Colonic mucosa (tissue), 4 donors: ENCODE measurements at regions of chr7 and their contacts with region 1.

Region 1: GRCh38 chr7:43582503-43583423 is at the start of gene STK17A:
- DNase-seq: peak; percentile 93
- H3K4me3 ChIP-seq: peak within 1 kb of the TSS; percentile 92
- H3K27ac ChIP-seq: peak within 1 kb of the TSS; percentile 94
- H3K4me1 ChIP-seq: no peaks in the 10 kb centered on the region
- H3K27me3 ChIP-seq: no peaks in the 10 kb centered on the region
- CTCF ChIP-seq: peak; percentile 88
- total RNA-seq, gene STK17A: 16.0 to 30.6 TPM

Region 2: GRCh38 chr7:43516581-43517342 is 66.0 kb before region 1 on chr7:
- intact Hi-C with region 1: no loop called
- DNase-seq: no peak
- H3K4me3 ChIP-seq: no peak overlapping the region
- H3K27ac ChIP-seq: no peak overlapping the region
- H3K4me1 ChIP-seq: no peaks in the 10 kb centered on the region
- H3K27me3 ChIP-seq: no peaks in the 10 kb centered on the region
- CTCF ChIP-seq: no peak

Region 3: DNA sequence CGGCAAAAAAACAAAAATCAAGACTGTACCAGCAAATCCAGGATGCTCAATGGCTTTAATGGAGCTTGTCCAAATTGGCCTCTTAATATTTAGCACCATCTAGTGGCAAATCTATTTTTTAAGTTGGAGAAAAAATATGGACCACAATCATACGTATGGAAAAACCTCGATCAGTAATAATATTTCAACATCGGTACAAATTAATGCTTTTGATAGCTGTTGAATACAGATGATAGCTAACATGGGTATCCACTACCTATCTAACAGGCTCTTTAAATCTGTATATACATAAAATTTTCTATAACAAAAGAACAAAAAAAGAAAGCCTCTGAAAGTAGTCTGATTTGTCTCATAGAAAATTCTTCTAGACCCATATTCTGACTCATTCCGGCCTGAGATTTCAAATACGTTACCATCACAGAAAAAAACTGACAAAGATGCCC is 117.3 kb after region 1 on chr7:
- intact Hi-C with region 1: loop called (anchors 2 kb)
- DNase-seq: no peak
- H3K4me3 ChIP-seq: no peak overlapping the region
- H3K27ac ChIP-seq: no peak overlapping the region
- H3K4me1 ChIP-seq: no peaks in the 10 kb centered on the region
- H3K27me3 ChIP-seq: no peaks in the 10 kb centered on the region
- CTCF ChIP-seq: peak; percentile 43

Region 4: DNA sequence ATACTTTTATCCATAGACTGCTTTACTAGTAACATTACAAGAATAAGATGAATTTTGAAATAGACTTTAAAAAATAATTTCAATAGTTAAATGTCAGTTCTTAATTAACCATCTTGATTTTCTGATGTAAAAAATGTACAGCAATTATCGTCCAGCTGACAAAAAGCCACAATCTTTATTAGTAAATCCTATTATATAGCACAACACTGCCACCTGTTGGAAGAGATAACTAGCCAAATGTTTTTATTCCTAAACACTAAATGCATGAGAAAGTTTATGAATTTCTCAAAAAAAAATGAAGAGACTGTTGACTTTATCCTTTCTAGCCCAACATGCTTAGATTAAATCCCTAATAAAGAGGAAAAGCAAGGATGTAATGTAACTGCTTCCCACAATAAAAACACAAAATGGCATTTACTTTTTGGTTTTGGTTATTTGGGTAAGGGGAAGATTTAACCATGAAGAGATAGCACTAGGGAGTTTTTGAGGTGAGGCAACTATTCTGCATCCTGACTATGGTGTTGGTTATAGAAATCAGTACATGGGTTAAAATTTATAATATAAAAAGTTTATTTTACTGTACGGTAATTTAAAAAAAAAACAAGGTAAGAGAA is 138.5 kb after region 1 on chr7:
- intact Hi-C with region 1: loop called (anchors 5 kb)
- DNase-seq: no peak
- H3K4me3 ChIP-seq: no peak overlapping the region
- H3K27ac ChIP-seq: no peak overlapping the region
- H3K4me1 ChIP-seq: no peaks in the 10 kb centered on the region
- H3K27me3 ChIP-seq: no peaks in the 10 kb centered on the region
- CTCF ChIP-seq: peak; percentile 56